ENCODE measurements at regions of chr1 and their contacts with region 1.

Region 1: DNA sequence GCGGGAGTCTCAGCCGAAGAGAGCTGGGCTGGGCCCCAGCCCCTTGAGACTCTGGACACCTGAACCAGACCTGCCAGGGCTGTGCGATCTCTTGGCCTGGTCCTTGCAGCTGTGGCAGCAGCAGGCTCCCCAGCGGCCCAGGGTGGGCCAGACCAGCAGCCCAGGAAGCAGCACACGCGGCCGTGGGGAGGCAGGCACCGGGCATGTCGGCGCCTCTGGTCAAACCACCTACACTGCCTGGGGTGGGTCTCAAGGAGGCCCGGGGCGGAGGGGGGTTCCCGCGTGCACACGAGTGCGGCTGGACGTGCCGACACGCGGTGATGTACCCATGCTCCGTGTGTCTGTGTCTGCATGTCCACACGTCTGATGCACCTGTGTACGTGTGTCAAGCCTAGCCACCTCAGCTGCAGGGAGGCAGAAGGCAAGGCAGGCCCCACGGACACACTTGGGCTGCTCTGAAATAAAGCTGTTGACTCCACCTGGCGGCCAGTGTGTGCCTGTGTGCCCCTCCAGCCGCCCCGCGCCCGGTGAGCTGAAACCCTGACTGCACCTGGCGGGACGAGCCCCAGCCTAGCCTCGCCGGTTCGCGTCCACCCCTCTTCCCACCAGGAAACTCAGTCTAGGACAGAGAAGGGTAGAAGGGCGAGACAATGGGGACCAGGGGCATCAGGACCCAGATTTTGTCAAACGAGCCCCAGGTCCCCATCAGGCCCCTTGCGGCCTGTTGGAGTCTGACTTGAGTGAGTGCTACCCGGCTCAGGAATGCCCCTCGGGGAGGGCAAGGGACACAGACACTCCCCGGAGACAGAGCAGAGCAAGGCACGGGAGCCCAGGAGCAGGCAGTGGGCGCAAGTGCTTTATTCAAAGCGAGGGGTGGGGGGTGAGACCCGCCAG is 11.6 kb downstream of the SCNN1D start:
- DNase-seq: peak in 1 of 2 experiments; percentile 86
- H3K4me3 ChIP-seq: no peak overlapping the region
- H3K27ac ChIP-seq: no peak overlapping the region
- H3K4me1 ChIP-seq: peaks cover 0 to 8% (median 0%) of the 10 kb centered on the region in 4 experiments; a peak in 2 of 7 replicates
- H3K27me3 ChIP-seq: peaks cover 0 to 3% (median 0%) of the 10 kb centered on the region in 4 experiments; a peak in 1 of 7 replicates
- CTCF ChIP-seq: peak in 2 of 3 experiments; percentile 81 to 87; a peak in 3 of 4 replicates
- EP300 ChIP-seq: no peak
- POLR2A ChIP-seq: no peak
- RAD21 ChIP-seq: peak; percentile 69 to 73

Region 2: DNA sequence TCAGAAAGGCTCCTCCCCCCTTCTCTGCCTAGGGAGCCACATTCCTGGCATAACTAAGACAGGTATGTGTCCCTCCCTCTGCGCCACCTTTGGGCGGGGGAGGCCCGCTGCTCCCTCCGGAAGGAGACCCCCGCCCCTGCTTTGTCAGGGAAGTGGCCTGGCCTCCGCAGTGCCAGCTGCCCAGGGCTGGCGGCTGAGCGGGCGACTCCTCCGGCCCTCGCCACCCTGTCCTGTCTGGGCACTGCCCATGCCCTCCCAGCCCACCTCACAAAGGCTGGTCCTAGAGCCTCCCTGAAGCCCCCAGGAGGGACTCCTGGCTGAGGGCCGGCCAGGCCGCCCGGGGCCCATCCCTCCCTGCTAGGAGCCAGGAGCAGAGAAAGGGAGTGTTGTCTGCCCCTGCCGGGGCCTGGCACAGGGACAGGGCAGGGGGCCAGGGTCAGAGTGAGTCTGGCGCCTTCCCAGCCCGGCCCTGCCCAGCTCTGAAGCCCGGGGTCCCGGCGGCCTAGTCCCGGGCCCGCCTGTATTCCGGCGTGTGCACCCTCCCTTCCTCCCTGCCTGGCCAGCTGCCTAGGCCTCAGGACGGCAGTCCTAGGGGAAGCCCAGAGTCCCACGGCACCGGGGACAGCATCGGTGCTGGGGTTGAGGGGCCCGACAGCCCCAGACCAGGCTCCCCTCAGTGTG is 266.9 kb before region 1 on chr1:
- CTCF ChIA-PET with region 1: no interaction called
- POLR2A ChIA-PET with region 1: no interaction called
- DNase-seq: no peak
- H3K4me3 ChIP-seq: peak overlapping the region in 1 of 4 experiments; percentile 36; a peak in 2 of 8 replicates
- H3K27ac ChIP-seq: peak overlapping the region; percentile 61; the same call in 1 of the 2 replicates
- H3K4me1 ChIP-seq: peaks cover 2 to 57% (median 38%) of the 10 kb centered on the region in 4 experiments
- H3K27me3 ChIP-seq: no peaks in the 10 kb centered on the region
- CTCF ChIP-seq: no peak
- EP300 ChIP-seq: peak; percentile 32 to 87; a peak in 2 of 3 replicates
- POLR2A ChIP-seq: peak in 1 of 2 experiments; percentile 30; a peak in 1 of 3 replicates
- RAD21 ChIP-seq: no peak

Region 3: DNA sequence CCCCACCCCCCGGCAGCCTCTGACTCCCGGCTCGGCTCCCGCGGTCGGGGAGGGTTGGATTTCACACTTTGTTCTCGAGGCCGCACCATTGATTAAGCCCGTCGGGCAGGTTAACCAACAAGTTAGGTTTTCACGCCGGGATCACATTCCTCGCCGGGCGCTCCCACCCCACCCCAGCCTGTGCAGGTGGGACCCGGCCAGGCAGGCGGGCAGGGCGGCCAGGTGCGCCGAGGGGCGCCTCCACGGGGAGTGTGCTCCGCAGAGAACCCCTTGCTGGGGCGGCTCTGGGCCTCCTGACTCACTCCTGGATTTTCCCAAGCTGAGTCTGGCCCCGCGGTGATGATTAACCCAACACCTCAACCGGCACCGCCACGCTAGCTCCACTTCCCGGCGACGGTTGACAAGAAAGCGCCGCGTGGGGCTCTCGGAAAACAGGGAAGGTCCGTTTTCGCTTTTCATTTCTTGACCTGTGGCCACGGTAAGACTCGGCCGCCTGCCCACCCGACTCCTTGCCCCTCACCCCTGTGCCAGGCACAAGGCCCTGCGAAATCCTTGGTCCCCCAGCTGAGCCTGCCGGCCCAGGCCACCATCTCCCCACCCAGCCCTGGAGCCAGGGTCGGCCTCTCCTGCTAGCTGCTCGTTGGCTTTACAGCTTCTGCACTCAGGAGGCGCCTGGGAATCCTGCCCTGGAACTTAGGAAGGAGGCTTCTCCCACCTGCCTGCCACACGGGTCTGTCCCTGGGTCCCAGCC is 126.9 kb before region 1 on chr1:
- CTCF ChIA-PET with region 1: interaction called, 10 read pairs
- POLR2A ChIA-PET with region 1: interaction called, 3 read pairs
- DNase-seq: no peak
- H3K4me3 ChIP-seq: peak overlapping the region in 1 of 4 experiments; percentile 25; a peak in 2 of 8 replicates
- H3K27ac ChIP-seq: no peak overlapping the region
- H3K4me1 ChIP-seq: peaks cover 0 to 37% (median 20%) of the 10 kb centered on the region in 4 experiments; a peak in 6 of 7 replicates
- H3K27me3 ChIP-seq: no peaks in the 10 kb centered on the region
- CTCF ChIP-seq: no peak
- EP300 ChIP-seq: no peak
- POLR2A ChIP-seq: no peak
- RAD21 ChIP-seq: no peak

Region 4: GRCh38 chr1:1256956-1257871 is 34.6 kb before region 1 on chr1:
- CTCF ChIA-PET with region 1: interaction called, 11 read pairs
- POLR2A ChIA-PET with region 1: interaction called, 7 read pairs
- DNase-seq: no peak
- H3K4me3 ChIP-seq: no peak overlapping the region
- H3K27ac ChIP-seq: no peak overlapping the region; the same call in 1 of the 2 replicates
- H3K4me1 ChIP-seq: peaks cover 0 to 14% (median 8%) of the 10 kb centered on the region in 4 experiments; a peak in 6 of 7 replicates
- H3K27me3 ChIP-seq: no peaks in the 10 kb centered on the region
- CTCF ChIP-seq: no peak
- EP300 ChIP-seq: no peak
- POLR2A ChIP-seq: no peak
- RAD21 ChIP-seq: no peak

Region 5: GRCh38 chr1:1273512-1274298 is 18.1 kb before region 1 on chr1 and contains the start of gene UBE2J2:
- CTCF ChIA-PET with region 1: interaction called, 38 read pairs
- POLR2A ChIA-PET with region 1: interaction called, 12 read pairs
- DNase-seq: peak; percentile 58 to 90
- H3K4me3 ChIP-seq: peak within 1 kb of the TSS; percentile 88 to 99 (median 91)
- H3K27ac ChIP-seq: peak within 1 kb of the TSS; percentile 83; the same call in 1 of the 2 replicates
- H3K4me1 ChIP-seq: peaks cover 0 to 17% (median 8%) of the 10 kb centered on the region in 4 experiments; a peak in 5 of 7 replicates
- H3K27me3 ChIP-seq: no peaks in the 10 kb centered on the region; a peak in 1 of 7 replicates
- CTCF ChIP-seq: no peak
- EP300 ChIP-seq: peak in 1 of 2 experiments; percentile 60; a peak in 1 of 3 replicates
- POLR2A ChIP-seq: peak in 1 of 2 experiments; percentile 77; a peak in 2 of 3 replicates
- RAD21 ChIP-seq: no peak
- total RNA-seq, gene UBE2J2: 67.2 and 67.9 TPM in 2 replicates

Region 6: GRCh38 chr1:1305300-1306069 is 13.7 kb after region 1 on chr1:
- CTCF ChIA-PET with region 1: interaction called, 17 read pairs
- POLR2A ChIA-PET with region 1: interaction called, 7 read pairs
- DNase-seq: no peak
- H3K4me3 ChIP-seq: no peak overlapping the region
- H3K27ac ChIP-seq: peak overlapping the region; percentile 38; the same call in 1 of the 2 replicates
- H3K4me1 ChIP-seq: peaks cover 0 to 40% (median 31%) of the 10 kb centered on the region in 4 experiments; a peak in 6 of 7 replicates
- H3K27me3 ChIP-seq: peaks cover 0 to 4% (median 1%) of the 10 kb centered on the region in 4 experiments; a peak in 1 of 7 replicates
- CTCF ChIP-seq: peak in 1 of 3 experiments; percentile 9; a peak in 1 of 4 replicates
- EP300 ChIP-seq: no peak
- POLR2A ChIP-seq: no peak
- RAD21 ChIP-seq: 0 out of 4 replicates have a peak, but pooled peaks of 1 of the 2 experiments have one; percentile 12